Heart left ventricle (tissue), 16 donors: ENCODE measurements at regions of chr14 and their contacts with region 1.

Region 1: GRCh38 chr14:88168498-88169165 is 154.4 kb downstream of the KCNK10 start:
- DNase-seq: peak in 1 of 5 donors; percentile 20
- ATAC-seq: peak; percentile 67 to 88 (median 76)
- H3K4me3 ChIP-seq: no peak overlapping the region
- H3K27ac ChIP-seq: no peak overlapping the region
- H3K4me1 ChIP-seq: no peaks in the 10 kb centered on the region
- H3K27me3 ChIP-seq: peaks cover 0 to 7% (median 0%) of the 10 kb centered on the region in 9 donors
- CTCF ChIP-seq: peak; percentile 44 to 69 (median 61)
- POLR2A ChIP-seq: no peak

Region 2: DNA sequence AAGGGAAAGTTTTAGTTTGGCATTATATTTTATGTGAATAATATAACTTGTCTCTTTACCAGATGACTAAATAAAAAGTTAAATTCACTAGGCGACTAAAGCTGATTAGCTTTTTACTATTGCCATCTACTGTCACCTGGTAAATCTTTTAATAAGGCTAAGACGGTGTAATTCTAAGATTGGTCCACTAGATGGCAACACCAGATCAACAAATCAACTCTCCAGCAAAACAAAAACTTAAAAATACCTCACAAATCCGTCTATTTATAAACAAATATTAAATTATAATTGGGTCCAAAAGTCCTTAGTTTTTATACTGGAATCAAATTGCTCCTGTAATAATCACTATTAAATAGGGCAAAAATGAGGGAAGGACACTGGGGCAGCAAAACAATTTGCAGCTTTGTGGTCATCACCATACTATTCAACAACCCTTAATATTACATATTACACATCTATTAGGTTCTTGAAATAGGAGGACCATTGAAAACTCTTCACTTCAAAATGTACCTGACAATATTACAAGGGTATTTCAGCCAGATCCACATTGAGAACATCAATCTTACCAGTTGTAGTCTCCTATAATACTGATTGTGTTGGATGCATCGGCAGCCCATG is 223.5 kb before region 1 on chr14:
- intact Hi-C with region 1: loop called (anchors 2 to 10 kb)
- DNase-seq: no peak
- ATAC-seq: no peak
- H3K4me3 ChIP-seq: no peak overlapping the region
- H3K27ac ChIP-seq: no peak overlapping the region
- H3K4me1 ChIP-seq: no peaks in the 10 kb centered on the region
- H3K27me3 ChIP-seq: no peaks in the 10 kb centered on the region
- CTCF ChIP-seq: peak; percentile 58 to 76 (median 66)
- POLR2A ChIP-seq: no peak

Region 3: GRCh38 chr14:88209273-88209672 is 40.6 kb after region 1 on chr14:
- intact Hi-C with region 1: no loop called
- DNase-seq: no peak
- ATAC-seq: no peak
- H3K4me3 ChIP-seq: no peak overlapping the region
- H3K27ac ChIP-seq: no peak overlapping the region
- H3K4me1 ChIP-seq: peaks cover 0 to 3% (median 0%) of the 10 kb centered on the region in 12 donors
- H3K27me3 ChIP-seq: peaks cover 0 to 9% (median 0%) of the 10 kb centered on the region in 9 donors
- CTCF ChIP-seq: no peak
- POLR2A ChIP-seq: no peak

Region 4: GRCh38 chr14:88323523-88324199 is 155.0 kb after region 1 on chr14:
- intact Hi-C with region 1: no loop called
- DNase-seq: no peak
- ATAC-seq: no peak
- H3K4me3 ChIP-seq: peak overlapping the region in 10 of 12 donors; percentile 24 to 56 (median 42)
- H3K27ac ChIP-seq: no peak overlapping the region
- H3K4me1 ChIP-seq: peaks cover 0 to 25% (median 4%) of the 10 kb centered on the region in 12 donors
- H3K27me3 ChIP-seq: peaks cover 22 to 93% (median 66%) of the 10 kb centered on the region in 9 donors
- CTCF ChIP-seq: no peak
- POLR2A ChIP-seq: no peak